ENCODE measurements at regions of chr9 and their contacts with region 1.

Region 1: GRCh38 chr9:13033959-13034693 is 245.4 kb downstream of the MPDZ start:
- DNase-seq: peak; percentile 38
- ATAC-seq: peak; percentile 97
- H3K4me3 ChIP-seq: 0 out of 6 replicates have a peak overlapping the region, but pooled peaks of 1 of the 3 experiments have one; percentile 12
- H3K27ac ChIP-seq: no peak overlapping the region
- H3K4me1 ChIP-seq: peaks cover 12% of the 10 kb centered on the region
- H3K27me3 ChIP-seq: no peaks in the 10 kb centered on the region
- CTCF ChIP-seq: peak; percentile 90
- EP300 ChIP-seq: 0 out of 4 replicates have a peak, but pooled peaks of 1 of the 2 experiments have one; percentile 4
- POLR2A ChIP-seq: no peak
- RAD21 ChIP-seq: peak; percentile 57

Region 2: DNA sequence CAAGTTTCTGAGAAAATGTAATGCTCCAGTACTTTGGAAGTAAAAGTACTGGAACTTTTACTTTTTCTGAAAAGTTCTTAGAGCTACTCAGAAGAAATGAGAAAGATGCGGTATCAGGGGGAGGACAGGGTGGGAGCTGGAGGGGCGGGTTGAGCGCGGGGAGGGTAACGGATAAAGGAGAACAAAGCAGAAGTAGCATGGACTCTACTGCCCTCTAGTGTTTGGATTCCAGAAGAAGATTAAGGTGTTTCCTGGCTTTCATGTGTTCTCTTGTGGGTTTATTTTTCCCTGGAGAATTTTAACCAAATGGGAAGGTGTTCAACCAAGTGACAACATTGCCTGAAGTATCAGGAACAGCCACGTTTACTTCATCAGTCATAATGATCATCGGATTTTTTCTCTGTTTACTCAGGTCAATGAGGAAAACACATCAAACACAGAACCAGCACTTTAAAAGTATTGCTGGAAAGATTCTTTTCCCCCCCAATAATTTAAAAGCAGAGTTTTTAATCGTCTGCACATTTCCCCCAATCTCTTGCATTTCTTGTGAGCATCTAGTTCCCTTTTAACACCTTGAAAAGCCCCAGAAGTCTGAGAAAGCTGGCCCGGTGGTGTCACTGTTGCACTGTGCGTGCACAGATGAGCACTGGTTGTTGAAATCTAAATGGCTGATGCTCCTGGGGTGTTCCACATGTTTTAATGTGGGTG is 54.7 kb after region 1 on chr9:
- CTCF ChIA-PET with region 1: interaction called, 7 read pairs
- POLR2A ChIA-PET with region 1: no interaction called
- in situ Hi-C with region 1: no loop called
- intact Hi-C with region 1: loop called (anchors 1 kb)
- DNase-seq: peak; percentile 36
- ATAC-seq: peak; percentile 78
- H3K4me3 ChIP-seq: no peak overlapping the region
- H3K27ac ChIP-seq: no peak overlapping the region
- H3K4me1 ChIP-seq: no peaks in the 10 kb centered on the region
- H3K27me3 ChIP-seq: no peaks in the 10 kb centered on the region
- CTCF ChIP-seq: peak; percentile 68
- EP300 ChIP-seq: no peak
- POLR2A ChIP-seq: no peak
- RAD21 ChIP-seq: no peak

Region 3: GRCh38 chr9:13209498-13209897 is 175.4 kb after region 1 on chr9:
- CTCF ChIA-PET with region 1: no interaction called
- POLR2A ChIA-PET with region 1: no interaction called
- in situ Hi-C with region 1: no loop called
- intact Hi-C with region 1: no loop called
- DNase-seq: no peak
- ATAC-seq: no peak
- H3K4me3 ChIP-seq: no peak overlapping the region
- H3K27ac ChIP-seq: no peak overlapping the region
- H3K4me1 ChIP-seq: no peaks in the 10 kb centered on the region
- H3K27me3 ChIP-seq: no peaks in the 10 kb centered on the region
- CTCF ChIP-seq: no peak
- EP300 ChIP-seq: no peak
- POLR2A ChIP-seq: no peak
- RAD21 ChIP-seq: no peak

Region 4: GRCh38 chr9:13274886-13275641 is 240.9 kb after region 1 on chr9:
- CTCF ChIA-PET with region 1: no interaction called
- POLR2A ChIA-PET with region 1: no interaction called
- in situ Hi-C with region 1: no loop called
- intact Hi-C with region 1: no loop called
- DNase-seq: no peak
- ATAC-seq: no peak
- H3K4me3 ChIP-seq: no peak overlapping the region
- H3K27ac ChIP-seq: no peak overlapping the region
- H3K4me1 ChIP-seq: peaks cover 18% of the 10 kb centered on the region
- H3K27me3 ChIP-seq: no peaks in the 10 kb centered on the region
- CTCF ChIP-seq: no peak
- EP300 ChIP-seq: no peak
- POLR2A ChIP-seq: no peak
- RAD21 ChIP-seq: no peak

Region 5: GRCh38 chr9:13427587-13427986 is 393.5 kb after region 1 on chr9:
- CTCF ChIA-PET with region 1: no interaction called
- POLR2A ChIA-PET with region 1: no interaction called
- in situ Hi-C with region 1: no loop called
- intact Hi-C with region 1: loop called (anchors 5 kb)
- DNase-seq: peak; percentile 14
- ATAC-seq: no peak
- H3K4me3 ChIP-seq: no peak overlapping the region
- H3K27ac ChIP-seq: no peak overlapping the region
- H3K4me1 ChIP-seq: no peaks in the 10 kb centered on the region
- H3K27me3 ChIP-seq: no peaks in the 10 kb centered on the region
- CTCF ChIP-seq: peak; percentile 49
- EP300 ChIP-seq: no peak
- POLR2A ChIP-seq: no peak
- RAD21 ChIP-seq: no peak

Region 6: DNA sequence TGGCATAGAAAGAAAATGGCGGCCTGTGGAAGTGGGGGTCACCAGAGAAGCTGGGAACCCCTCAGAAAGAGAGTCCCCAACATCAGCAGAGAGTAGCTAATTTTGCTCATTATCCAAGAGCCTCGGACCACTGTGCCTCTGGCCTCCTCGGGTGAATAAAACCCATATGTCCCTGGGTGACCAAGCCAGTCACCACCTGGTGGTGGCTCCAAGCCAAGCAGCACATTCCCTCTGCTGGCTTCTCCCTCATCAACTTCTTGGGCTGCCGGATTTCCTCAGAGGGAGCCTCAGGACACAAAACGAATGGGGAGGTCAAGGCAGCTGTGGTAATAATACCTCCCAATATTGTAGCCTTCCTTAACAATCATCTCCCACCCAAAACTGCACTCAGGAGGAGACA is 1037.4 kb after region 1 on chr9:
- CTCF ChIA-PET with region 1: no interaction called
- POLR2A ChIA-PET with region 1: no interaction called
- in situ Hi-C with region 1: no loop called
- intact Hi-C with region 1: loop called (anchors 5 kb)
- DNase-seq: no peak
- ATAC-seq: peak; percentile 64
- H3K4me3 ChIP-seq: no peak overlapping the region
- H3K27ac ChIP-seq: no peak overlapping the region
- H3K4me1 ChIP-seq: no peaks in the 10 kb centered on the region
- H3K27me3 ChIP-seq: no peaks in the 10 kb centered on the region
- CTCF ChIP-seq: no peak
- EP300 ChIP-seq: no peak
- POLR2A ChIP-seq: no peak
- RAD21 ChIP-seq: no peak

Region 7: GRCh38 chr9:14428781-14429230 is 1394.7 kb after region 1 on chr9:
- CTCF ChIA-PET with region 1: no interaction called
- POLR2A ChIA-PET with region 1: no interaction called
- in situ Hi-C with region 1: no loop called
- intact Hi-C with region 1: loop called (anchors 2 kb)
- DNase-seq: peak; percentile 25
- ATAC-seq: peak; percentile 94
- H3K4me3 ChIP-seq: no peak overlapping the region
- H3K27ac ChIP-seq: no peak overlapping the region
- H3K4me1 ChIP-seq: no peaks in the 10 kb centered on the region
- H3K27me3 ChIP-seq: peaks cover 0 to 2% of the 10 kb centered on the region in 2 experiments; a peak in 1 of 5 replicates
- CTCF ChIP-seq: peak; percentile 70
- EP300 ChIP-seq: no peak
- POLR2A ChIP-seq: no peak
- RAD21 ChIP-seq: no peak

Measured in HepG2 (cell line).